Heart left ventricle (tissue), 16 donors: ENCODE measurements at regions of chr17 and their contacts with region 1.

Region 1: DNA sequence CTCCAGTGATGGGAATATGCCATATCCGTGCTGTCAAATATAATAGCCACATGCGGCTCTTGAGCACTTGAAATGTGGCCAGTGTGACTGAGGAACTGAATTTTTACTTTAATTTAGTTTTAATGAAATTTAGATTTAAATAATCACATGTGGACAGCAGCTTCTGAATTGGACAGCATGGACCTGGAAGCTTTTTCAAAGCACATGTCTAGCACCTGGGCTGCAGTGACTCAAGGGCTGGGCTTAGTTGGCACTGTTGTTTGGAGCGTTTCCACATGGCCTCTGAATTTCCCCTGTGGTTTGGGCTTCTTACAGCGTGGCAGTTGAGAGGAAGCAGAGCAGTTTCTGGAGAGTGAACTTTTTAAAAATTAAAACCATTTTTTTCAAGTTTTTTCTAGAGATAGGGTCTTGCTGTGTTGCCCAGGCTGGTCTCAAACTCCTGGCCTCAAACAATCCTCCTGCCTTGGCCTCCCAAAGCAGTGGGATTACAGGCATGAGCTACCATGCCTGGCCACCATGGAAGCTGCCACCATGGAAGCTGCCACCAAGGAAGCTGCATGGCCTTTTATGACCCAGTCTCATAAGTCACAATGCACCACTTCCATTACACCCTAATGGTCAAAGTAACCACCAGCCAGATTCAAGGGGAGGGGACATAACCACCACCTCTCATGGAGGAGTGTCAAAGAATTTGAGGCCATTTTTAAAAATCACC is 6.7 kb upstream of the TOB1 start:
- DNase-seq: peak in 1 of 5 donors; percentile 31
- ATAC-seq: peak in 3 of 4 donors; percentile 44 to 57 (median 51)
- H3K4me3 ChIP-seq: no peak overlapping the region
- H3K27ac ChIP-seq: peak overlapping the region in 7 of 12 donors; percentile 17 to 59 (median 38)
- H3K4me1 ChIP-seq: peaks cover 0 to 37% (median 20%) of the 10 kb centered on the region in 12 donors
- H3K27me3 ChIP-seq: no peaks in the 10 kb centered on the region
- CTCF ChIP-seq: no peak
- POLR2A ChIP-seq: no peak

Region 2: GRCh38 chr17:50861071-50861676 is 11.7 kb before region 1 on chr17:
- intact Hi-C with region 1: no loop called
- DNase-seq: no peak
- ATAC-seq: no peak
- H3K4me3 ChIP-seq: peak overlapping the region in 4 of 12 donors; percentile 88 to 96 (median 90)
- H3K27ac ChIP-seq: peak overlapping the region in 7 of 12 donors; percentile 0 to 100 (median 23)
- H3K4me1 ChIP-seq: peaks cover 2 to 41% (median 33%) of the 10 kb centered on the region in 12 donors
- H3K27me3 ChIP-seq: no peaks in the 10 kb centered on the region
- CTCF ChIP-seq: no peak
- POLR2A ChIP-seq: no peak

Region 3: DNA sequence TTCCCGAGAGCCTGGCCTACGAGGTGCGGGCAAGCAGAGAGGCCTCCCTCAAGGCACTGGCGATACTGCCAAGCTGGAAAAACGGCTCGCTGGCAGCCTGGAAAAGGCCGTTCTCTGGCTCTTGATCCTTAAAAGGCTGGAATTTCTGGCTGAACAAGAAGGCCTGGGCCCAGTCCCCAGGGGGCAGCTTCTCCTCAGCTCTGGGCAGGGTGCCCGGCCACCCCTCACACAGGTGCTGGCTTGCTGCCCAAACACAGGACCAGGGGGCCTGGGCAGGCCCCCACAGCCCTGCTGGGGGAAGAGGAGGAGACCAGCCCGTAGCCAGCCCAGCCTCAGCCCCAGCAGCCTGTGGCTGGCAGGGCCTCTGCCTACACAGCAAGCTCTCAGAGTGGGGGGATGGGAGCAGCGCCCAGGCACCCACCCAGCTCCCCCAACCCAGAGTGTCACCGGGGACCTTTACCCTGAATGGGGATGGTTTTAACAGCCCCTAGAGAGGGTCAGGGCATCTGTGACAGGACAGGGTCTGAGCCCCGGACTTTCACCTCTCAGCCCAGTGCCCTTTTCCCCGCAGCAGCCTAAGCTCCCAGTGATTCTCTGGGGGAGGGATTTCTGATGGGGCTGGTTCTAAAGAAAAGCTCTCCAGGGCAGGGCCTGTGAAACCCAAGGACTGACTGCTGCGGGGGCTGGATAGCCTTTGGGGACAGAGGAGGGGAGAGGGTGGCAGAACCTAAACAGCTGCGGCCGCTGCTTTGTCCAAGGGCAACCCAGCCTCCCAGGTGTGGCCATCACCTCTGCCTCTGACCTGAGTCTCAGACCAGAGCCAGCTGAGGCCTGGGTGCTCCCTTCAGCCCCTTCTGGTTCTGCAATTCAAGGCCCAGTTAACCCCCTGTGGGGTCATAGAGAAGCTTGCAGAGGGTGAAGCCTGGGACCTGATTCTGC is 31.9 kb after region 1 on chr17:
- intact Hi-C with region 1: loop called in 2 of 10 experiments (anchors 5 kb)
- DNase-seq: peak in 3 of 5 donors; percentile 45 to 55 (median 50)
- ATAC-seq: peak; percentile 30 to 68 (median 64)
- H3K4me3 ChIP-seq: no peak overlapping the region
- H3K27ac ChIP-seq: peak overlapping the region; percentile 45 to 95 (median 85)
- H3K4me1 ChIP-seq: peaks cover 0 to 41% (median 29%) of the 10 kb centered on the region in 12 donors
- H3K27me3 ChIP-seq: no peaks in the 10 kb centered on the region
- CTCF ChIP-seq: peak in 1 of 12 donors; percentile 9
- POLR2A ChIP-seq: no peak

Region 4: GRCh38 chr17:50919321-50920085 is 46.6 kb after region 1 on chr17:
- intact Hi-C with region 1: loop called in 7 of 10 experiments (anchors 5 kb)
- DNase-seq: peak; percentile 91 to 96 (median 92)
- ATAC-seq: peak; percentile 88 to 93 (median 92)
- H3K4me3 ChIP-seq: no peak overlapping the region
- H3K27ac ChIP-seq: peak overlapping the region; percentile 69 to 89 (median 82)
- H3K4me1 ChIP-seq: peaks cover 13 to 66% (median 49%) of the 10 kb centered on the region in 12 donors
- H3K27me3 ChIP-seq: no peaks in the 10 kb centered on the region
- CTCF ChIP-seq: no peak
- POLR2A ChIP-seq: no peak